Gastrocnemius medialis (tissue), 4 donors: ENCODE measurements at regions of chr16 and their contacts with region 1.

Region 1: GRCh38 chr16:47395733-47396498 is 64.9 kb downstream of the ITFG1 start:
- DNase-seq: no peak
- ATAC-seq: peak; percentile 96
- H3K4me3 ChIP-seq: peak overlapping the region; percentile 39 to 44 (median 42)
- H3K27ac ChIP-seq: peak overlapping the region; percentile 77 to 88 (median 82)
- H3K4me1 ChIP-seq: peaks cover 43% of the 10 kb centered on the region in 2 donors
- H3K27me3 ChIP-seq: no peaks in the 10 kb centered on the region
- CTCF ChIP-seq: no peak
- POLR2A ChIP-seq: no peak

Region 2: DNA sequence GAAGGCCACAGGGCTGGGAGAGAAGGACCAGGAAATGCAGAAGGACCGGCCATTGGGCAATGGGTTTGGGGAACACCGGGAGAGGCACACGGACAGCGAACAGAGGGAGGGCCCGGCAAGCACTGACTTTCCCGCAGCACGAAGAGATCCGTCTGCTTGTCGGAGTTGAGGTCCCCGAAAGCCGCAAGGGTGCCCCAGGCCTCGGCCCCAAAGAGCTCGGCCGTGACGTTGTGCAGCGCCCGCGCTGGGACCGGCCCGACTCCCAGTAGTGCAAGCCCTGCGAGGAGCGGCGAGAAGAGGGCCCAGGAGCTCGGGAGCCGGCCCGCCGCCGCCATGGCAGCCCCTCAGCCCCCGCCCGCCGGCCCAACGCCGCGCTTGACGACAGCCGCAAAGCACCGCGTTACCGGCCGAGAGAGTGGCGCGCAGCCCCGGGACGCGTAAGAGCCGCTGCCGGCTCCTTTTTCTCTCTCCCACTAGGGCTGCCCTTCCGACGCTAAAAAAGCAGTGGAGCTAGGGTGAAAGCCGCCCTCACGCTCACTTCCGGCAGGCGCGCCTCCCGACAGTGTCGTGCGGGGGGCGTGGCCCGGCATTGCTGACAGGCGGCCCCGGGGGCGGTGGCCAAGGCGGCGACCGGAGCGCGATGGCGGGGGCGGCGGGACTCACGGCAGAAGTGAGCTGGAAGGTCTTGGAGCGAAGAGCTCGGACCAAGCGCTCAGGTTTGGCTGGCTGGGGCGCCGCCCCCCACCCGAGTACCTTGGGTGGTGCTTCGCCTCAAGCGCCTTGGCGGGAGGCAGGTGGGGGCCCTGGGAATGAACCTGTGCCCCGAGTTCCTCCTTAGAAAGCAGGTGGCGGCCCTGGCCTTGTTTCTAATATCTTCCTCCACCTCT is 65.0 kb after region 1 on chr16 and contains the starts of genes ITFG1 and PHKB:
- in situ Hi-C with region 1: no loop called
- intact Hi-C with region 1: loop called (anchors 2 kb)
- DNase-seq: peak; percentile 85 to 93
- ATAC-seq: peak; percentile 87 to 89
- H3K4me3 ChIP-seq: peak within 1 kb of the TSS; percentile 70 to 96 (median 92)
- H3K27ac ChIP-seq: peak within 1 kb of the TSS; percentile 93 to 99 (median 96)
- H3K4me1 ChIP-seq: peaks cover 54 to 60% of the 10 kb centered on the region in 2 donors
- H3K27me3 ChIP-seq: no peaks in the 10 kb centered on the region
- CTCF ChIP-seq: peak in 3 of 5 experiments; percentile 13 to 28 (median 22)
- POLR2A ChIP-seq: peak; percentile 76 to 86
- total RNA-seq, gene ITFG1: 20.9 to 37.3 (median 28.6) TPM
- total RNA-seq, gene PHKB: 61.0 to 91.6 (median 79.8) TPM

Region 3: GRCh38 chr16:47504599-47504998 is 108.7 kb after region 1 on chr16:
- in situ Hi-C with region 1: no loop called
- intact Hi-C with region 1: no loop called
- DNase-seq: no peak
- ATAC-seq: no peak
- H3K4me3 ChIP-seq: no peak overlapping the region
- H3K27ac ChIP-seq: no peak overlapping the region
- H3K4me1 ChIP-seq: peaks cover 0 to 9% of the 10 kb centered on the region in 2 donors
- H3K27me3 ChIP-seq: no peaks in the 10 kb centered on the region
- CTCF ChIP-seq: no peak
- POLR2A ChIP-seq: no peak